A549 (cell line): ENCODE measurements at regions of chr1 and their contacts with region 1.

Region 1: DNA sequence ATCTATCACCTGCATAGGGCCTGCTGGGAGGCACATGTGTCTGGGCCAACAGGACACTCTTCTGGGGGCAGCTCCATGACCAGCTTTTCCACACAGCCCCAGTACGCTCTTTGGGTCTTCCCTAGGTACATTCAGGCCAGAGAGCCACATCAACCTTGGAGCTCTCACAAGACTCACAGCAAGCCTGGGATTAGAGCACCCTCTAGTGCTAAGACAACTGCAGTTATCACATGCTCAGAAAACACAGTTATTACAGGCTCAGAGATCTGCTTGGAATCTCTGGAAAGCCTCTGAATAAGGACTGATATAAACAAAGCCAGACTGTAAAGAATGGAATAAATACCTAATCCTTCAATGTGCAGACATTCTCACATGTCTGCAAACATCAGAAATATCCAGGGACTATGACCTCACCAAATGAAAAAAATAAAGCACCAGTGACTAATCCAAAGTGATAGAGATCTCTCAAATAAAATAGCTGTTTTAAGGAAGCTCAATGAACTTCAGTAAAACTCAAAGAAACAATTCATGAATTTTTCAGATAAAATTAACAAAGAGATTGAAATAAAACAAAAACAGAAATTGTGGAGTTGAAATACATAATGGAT is 563.9 kb upstream of the NR5A2 start:
- DNase-seq: peak; percentile 9 to 64
- ATAC-seq: peak; percentile 85 to 94
- H3K4me3 ChIP-seq: no peak overlapping the region
- H3K27ac ChIP-seq: no peak overlapping the region
- H3K4me1 ChIP-seq: no peaks in the 10 kb centered on the region
- CTCF ChIP-seq: peak; percentile 49
- EP300 ChIP-seq: no peak
- POLR2A ChIP-seq: no peak
- RAD21 ChIP-seq: peak; percentile 66 to 84

Region 2: GRCh38 chr1:198756470-198756869 is 707.2 kb before region 1 on chr1:
- CTCF ChIA-PET with region 1: interaction called, 19 read pairs
- POLR2A ChIA-PET with region 1: no interaction called
- DNase-seq: peak in 1 of 2 experiments; percentile 20
- ATAC-seq: peak in 1 of 2 experiments; percentile 73; a peak in 4 of 6 replicates
- H3K4me3 ChIP-seq: no peak overlapping the region
- H3K27ac ChIP-seq: no peak overlapping the region
- H3K4me1 ChIP-seq: no peaks in the 10 kb centered on the region
- CTCF ChIP-seq: peak; percentile 51
- EP300 ChIP-seq: no peak
- POLR2A ChIP-seq: no peak
- RAD21 ChIP-seq: peak; percentile 60 to 78

Region 3: DNA sequence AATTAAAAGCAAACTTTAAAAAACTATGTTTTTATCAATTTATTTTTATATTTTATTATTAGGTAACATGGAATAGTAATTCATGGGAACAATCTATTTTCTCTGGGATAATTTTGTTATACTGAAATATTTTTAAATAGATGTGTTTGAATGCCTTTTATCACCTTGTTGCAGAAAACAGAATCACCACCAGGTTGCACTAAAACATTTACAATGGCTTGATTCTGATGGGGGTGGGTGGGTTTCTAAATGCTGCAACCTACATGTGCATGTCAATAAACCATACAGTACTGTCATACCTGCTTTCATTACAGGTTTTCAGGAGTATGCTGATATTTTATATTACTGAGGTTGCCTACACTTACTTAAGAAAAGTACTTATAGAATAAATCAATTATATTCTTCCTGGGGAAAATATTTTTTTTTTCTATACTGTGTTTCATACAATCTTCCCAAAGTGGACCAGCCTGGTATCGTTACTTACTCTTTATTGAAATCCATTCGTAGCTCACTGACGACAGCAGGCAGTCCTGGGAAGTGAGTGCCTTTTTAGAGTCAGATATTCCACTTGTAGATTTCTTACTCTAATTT is 692.0 kb before region 1 on chr1:
- CTCF ChIA-PET with region 1: interaction called, 10 read pairs
- POLR2A ChIA-PET with region 1: no interaction called
- DNase-seq: peak; percentile 9 to 42
- ATAC-seq: peak in 1 of 2 experiments; percentile 42; a peak in 1 of 6 replicates
- H3K4me3 ChIP-seq: no peak overlapping the region
- H3K27ac ChIP-seq: no peak overlapping the region
- H3K4me1 ChIP-seq: no peaks in the 10 kb centered on the region
- CTCF ChIP-seq: peak; percentile 47
- EP300 ChIP-seq: no peak
- POLR2A ChIP-seq: no peak
- RAD21 ChIP-seq: peak; percentile 68 to 74

Region 4: DNA sequence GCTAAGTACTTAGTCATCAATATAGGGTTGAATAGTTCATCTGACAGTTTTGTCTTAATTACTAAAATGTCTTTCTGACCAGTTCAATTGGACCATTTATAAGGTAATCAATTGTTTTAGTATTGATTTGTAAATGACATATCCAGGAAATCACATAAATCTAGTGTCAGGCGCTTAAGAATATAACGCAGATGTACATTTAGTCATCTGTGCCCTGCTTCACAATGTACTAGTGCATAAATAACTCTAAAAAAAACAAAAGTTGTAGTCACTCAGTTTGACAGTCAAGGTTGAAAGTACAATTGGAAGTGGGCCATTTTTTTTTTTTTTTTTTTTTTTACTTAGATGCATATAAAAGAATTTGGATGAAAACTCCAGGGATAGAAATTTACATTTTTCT is 334.4 kb before region 1 on chr1:
- CTCF ChIA-PET with region 1: no interaction called
- POLR2A ChIA-PET with region 1: no interaction called
- DNase-seq: no peak
- ATAC-seq: no peak
- H3K4me3 ChIP-seq: no peak overlapping the region
- H3K27ac ChIP-seq: no peak overlapping the region
- H3K4me1 ChIP-seq: no peaks in the 10 kb centered on the region
- CTCF ChIP-seq: no peak
- EP300 ChIP-seq: no peak
- POLR2A ChIP-seq: no peak
- RAD21 ChIP-seq: no peak

Region 5: DNA sequence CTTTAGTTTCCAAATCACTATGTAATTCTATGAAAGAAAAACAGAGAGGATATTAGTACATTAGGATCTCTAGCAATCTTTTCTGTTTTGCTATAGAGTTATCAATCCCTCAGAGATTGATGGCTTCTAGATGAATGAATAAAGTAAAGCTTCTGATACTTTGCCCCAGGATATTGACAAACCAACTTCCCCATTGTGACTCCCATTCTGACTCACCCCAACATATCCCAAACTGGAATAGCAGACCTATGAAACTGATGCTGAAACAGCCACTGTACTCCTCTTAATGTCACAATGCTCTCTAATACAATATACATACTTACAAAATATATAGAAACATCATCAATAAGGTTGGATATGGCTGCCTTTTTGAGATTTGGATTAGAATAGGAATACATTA is 121.8 kb after region 1 on chr1:
- CTCF ChIA-PET with region 1: no interaction called
- POLR2A ChIA-PET with region 1: no interaction called
- DNase-seq: peak in 1 of 2 experiments; percentile 4
- ATAC-seq: no peak
- H3K4me3 ChIP-seq: no peak overlapping the region
- H3K27ac ChIP-seq: no peak overlapping the region
- H3K4me1 ChIP-seq: no peaks in the 10 kb centered on the region
- CTCF ChIP-seq: no peak
- EP300 ChIP-seq: no peak
- POLR2A ChIP-seq: no peak
- RAD21 ChIP-seq: no peak